Activated CD4-positive, alpha-beta T cell treated with anti-CD3 and anti-CD28 coated beads, Interleukin-2, amount 10 ng/mL, durations not matched to agents 24 days and 14 days (primary cell): ENCODE measurements at regions of chr19 and their contacts with region 1.

Region 1: DNA sequence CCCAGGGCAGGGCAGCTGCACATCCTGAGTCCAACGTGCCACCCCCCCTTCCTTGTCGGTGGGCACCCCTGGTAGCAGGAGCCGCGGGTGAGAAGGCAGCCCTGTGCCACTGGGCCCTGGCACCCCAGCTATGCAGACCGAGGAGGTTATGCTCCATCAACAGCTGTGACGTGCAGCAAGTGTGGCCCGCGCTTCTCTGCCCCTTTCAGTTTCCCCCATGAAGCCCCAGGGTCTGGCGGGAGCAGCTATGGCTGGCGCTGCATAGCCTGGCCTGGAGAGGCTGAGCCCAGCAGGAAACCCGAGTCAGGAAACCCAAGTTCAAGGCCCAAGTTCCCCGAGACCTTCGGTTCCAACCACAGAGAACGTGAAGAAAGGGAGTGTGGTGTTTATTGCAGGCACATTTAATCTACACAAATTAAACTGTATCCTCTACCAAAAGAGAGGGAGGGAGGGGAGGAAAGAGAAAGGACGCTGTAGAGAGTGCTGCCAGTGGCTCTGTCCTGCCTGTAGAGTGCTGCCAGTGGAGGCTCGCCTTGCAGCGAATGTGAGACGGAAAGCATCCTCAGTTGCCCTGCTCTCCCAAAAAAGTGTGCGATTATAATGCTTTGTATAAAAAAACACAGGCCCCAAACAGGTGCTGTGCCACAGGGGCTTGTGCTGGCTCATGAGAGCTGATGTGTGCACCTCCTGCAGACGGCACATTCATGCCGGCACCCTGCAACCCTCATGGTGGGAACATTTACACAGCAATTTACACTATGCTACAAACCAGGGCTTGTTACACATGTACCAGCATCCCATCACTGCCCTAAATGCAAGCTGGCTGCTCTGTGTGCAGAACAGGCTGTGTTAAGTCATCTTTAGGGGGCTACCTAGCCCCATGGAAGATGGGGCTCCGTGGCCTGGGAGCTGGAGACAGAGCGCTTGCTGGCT is 16.3 kb downstream of the POP4 start:
- DNase-seq: peak; percentile 73
- H3K4me3 Mint-ChIP-seq: peak overlapping the region; percentile 6
- H3K27ac Mint-ChIP-seq: peak overlapping the region; percentile 45
- H3K4me1 Mint-ChIP-seq: peaks cover 49% of the 10 kb centered on the region
- H3K27me3 Mint-ChIP-seq: no peaks in the 10 kb centered on the region

Region 2: DNA sequence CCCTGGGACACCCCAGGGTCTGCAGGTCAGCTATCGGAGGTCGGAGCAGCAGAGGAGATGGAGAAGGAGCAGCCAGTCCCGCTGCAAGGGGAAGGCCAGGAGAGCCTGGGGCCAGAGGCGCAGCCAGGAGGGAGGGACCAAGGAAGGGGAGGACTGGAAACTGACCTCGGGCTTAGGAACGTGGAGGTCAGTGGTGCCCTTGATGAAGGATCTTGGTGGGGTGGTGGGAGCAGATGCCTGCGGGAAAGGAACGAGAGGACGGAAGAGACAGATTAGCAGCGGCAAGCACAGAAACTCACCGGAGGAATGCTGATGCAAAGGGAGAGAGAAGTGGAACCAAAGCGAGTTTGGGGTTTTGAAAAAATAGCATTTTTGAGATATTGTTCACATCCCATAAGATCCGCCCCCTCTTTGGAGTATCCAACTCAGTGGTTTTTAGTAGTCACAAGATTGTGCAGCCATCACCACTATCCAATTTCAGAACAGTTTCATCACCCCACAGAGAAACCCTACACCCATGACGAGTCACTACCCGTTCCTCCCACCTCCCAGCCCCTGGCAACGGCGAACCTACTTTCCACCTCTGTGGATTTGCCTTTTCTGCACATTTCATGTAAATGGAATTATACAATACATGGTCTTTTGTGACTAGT is 65.0 kb after region 1 on chr19:
- intact Hi-C with region 1: loop called (anchors 5 kb)
- DNase-seq: peak; percentile 65
- H3K4me3 Mint-ChIP-seq: peak overlapping the region; percentile 49
- H3K27ac Mint-ChIP-seq: peak overlapping the region; percentile 90
- H3K4me1 Mint-ChIP-seq: peaks cover 44% of the 10 kb centered on the region
- H3K27me3 Mint-ChIP-seq: no peaks in the 10 kb centered on the region